A673 (cell line): ENCODE measurements at regions of chr4 and their contacts with region 1.

Region 1: DNA sequence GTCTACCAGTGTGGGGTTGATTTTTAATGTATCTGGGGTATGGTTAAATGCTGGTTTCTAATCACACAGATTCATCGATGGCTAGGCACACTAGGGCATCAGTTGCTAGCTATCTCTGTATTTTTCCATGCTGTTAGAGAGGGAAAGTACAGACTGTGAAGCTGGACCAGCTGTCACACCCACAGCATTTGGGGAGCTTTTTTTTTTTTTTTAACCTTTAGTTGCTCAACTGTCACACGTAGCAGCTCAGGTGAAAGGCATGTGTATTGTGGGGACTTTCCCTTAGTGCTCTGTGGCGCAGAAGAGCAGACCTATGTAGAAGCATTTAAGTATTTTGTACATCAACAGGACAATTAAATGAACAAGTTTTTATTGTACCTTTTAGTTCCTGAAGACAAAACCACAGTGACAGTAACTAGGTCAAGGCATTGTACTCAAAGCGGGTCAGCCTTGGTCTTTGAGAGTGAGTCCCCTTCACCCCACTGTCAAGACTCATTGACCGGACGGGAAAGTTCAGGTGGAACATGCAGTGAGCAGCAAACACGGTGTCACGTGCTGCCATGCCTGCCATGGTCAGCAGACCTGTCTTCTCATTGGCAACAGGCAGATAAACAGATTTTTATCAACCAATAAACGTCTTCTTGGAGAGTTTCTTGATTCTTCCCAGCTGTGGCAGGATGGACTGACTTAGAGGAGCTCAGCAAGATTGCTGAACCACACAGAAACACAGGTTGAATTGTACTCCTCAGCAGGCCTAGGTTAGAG is 65.3 kb downstream of the CASP3 start:
- DNase-seq: no peak
- H3K4me3 ChIP-seq: no peak overlapping the region
- H3K27ac ChIP-seq: no peak overlapping the region
- H3K4me1 ChIP-seq: peaks cover 5% of the 10 kb centered on the region
- H3K27me3 ChIP-seq: no peaks in the 10 kb centered on the region
- CTCF ChIP-seq: no peak

Region 2: GRCh38 chr4:183118585-183118984 is 1465.3 kb before region 1 on chr4:
- CTCF ChIA-PET with region 1: no interaction called
- POLR2A ChIA-PET with region 1: interaction called, 12 read pairs
- intact Hi-C with region 1: no loop called
- DNase-seq: peak; percentile 67
- H3K4me3 ChIP-seq: no peak overlapping the region
- H3K27ac ChIP-seq: peak overlapping the region; percentile 53
- H3K4me1 ChIP-seq: peaks cover 26% of the 10 kb centered on the region
- H3K27me3 ChIP-seq: no peaks in the 10 kb centered on the region
- CTCF ChIP-seq: no peak

Region 3: DNA sequence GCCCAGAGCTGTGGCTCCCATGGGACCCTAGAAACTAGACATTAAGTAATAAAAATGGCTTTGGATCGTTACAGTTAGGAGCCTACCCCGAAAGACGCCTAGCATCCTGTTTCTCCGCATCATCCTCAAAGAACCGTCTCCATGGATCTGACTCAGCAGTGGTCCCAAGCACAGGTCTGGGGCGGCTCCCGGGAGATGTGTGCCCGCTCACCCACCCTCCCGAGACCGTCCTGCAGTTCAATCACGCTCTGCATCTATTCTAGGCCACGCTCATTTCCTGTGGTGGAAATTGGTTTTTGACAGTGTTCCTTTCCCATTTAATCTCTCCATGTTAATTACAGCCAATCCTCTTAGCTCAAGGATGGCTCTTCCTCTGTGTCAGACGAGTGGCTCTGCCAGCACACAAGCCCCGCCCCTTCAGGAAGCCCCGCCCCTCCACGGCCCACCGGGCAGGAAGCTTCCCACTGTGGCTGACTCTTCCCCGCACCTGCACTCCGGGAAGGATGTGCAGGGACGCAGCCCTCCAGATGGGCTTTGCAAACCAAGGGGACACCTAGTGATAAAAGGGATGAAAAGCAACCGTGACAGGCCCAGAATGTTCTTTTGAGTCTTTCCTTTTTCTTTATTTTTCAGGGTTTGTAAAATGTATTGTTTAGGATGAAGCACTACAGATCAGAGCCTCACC is 399.9 kb after region 1 on chr4:
- CTCF ChIA-PET with region 1: no interaction called
- POLR2A ChIA-PET with region 1: no interaction called
- intact Hi-C with region 1: loop called (anchors 5 kb)
- DNase-seq: peak; percentile 83
- H3K4me3 ChIP-seq: no peak overlapping the region
- H3K27ac ChIP-seq: no peak overlapping the region
- H3K4me1 ChIP-seq: peaks cover 5% of the 10 kb centered on the region
- H3K27me3 ChIP-seq: no peaks in the 10 kb centered on the region
- CTCF ChIP-seq: peak; percentile 56